ENCODE measurements at regions of chr5 and their contacts with region 1.

Region 1: DNA sequence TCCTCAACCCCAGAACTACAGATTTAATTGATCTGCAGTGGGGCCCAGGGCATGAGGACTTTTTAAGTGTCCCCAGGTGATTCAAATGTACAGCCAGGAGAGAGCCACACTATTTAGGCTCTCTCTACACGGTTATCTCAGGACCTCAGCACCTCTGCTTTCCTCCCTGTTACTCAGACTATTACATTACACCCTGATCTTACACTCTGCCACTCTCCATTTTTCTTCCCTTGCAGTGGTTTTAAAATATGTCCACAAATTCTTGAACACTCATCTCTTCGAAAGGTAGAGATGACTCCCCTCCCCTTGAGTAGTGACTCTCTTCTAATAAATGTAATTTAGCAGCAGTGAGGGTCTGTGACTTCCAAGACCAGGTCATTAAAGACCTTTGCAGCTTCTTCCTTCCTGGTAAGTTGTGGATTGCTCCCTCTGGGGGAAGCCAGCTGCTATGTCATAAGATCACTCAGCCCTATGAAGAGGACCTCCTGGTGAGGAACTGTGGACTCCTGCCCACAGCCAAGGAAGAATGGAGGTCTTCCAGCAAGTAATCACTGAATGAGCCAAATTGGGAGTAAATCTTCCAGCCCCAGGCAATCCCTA is 87.5 kb upstream of the SSBP2 start:
- DNase-seq: peak in 6 of 9 donors; percentile 24 to 50 (median 41)
- ATAC-seq: peak; percentile 87
- H3K4me3 ChIP-seq: no peak overlapping the region
- H3K4me3 Mint-ChIP-seq: no peak overlapping the region
- H3K27ac ChIP-seq: no peak overlapping the region
- H3K27ac Mint-ChIP-seq: peak overlapping the region in 4 of 9 donors; percentile 1 to 51 (median 6)
- H3K4me1 ChIP-seq: peaks cover 0 to 8% of the 10 kb centered on the region in 2 donors
- H3K4me1 Mint-ChIP-seq: peaks cover 4 to 12% (median 8%) of the 10 kb centered on the region in 7 donors
- H3K27me3 ChIP-seq: no peaks in the 10 kb centered on the region
- H3K27me3 Mint-ChIP-seq: peaks cover 0 to 3% (median 0%) of the 10 kb centered on the region in 5 donors

Region 2: DNA sequence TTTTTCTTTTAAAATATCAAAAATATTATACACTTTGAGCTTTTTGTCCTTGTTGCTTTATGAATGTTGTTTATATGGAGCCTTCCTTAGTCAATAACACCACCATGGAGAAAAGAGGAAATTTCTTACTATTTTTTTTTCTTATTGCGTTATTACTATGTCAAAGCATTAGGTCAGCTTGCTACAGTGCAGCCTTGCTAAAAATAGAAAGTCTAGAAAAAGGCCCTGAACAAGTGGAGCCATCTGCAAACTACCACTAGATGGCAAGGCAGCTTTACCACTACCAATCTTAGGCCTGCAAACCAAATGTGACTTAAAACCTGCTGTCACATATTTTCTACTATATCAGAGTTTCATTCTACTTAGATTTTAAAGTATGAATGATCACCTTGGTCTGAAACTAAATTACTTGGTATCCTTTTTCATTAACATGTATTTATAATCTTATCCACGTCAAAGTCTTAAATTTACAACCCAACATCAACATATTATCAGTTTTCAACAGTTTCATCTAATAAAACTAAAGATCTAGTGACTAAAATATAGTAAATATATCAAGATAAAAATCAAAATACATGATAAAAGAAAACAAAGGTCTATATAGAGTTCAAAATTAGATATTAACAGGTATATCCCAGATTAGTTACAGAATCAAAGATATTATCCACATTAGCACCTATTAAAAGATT is 331.4 kb before region 1 on chr5:
- CTCF ChIA-PET with region 1: interaction called, 6 read pairs
- POLR2A ChIA-PET with region 1: no interaction called
- intact Hi-C with region 1: loop called (anchors 1 kb)
- DNase-seq: peak in 7 of 9 donors; percentile 34 to 66 (median 55)
- ATAC-seq: peak; percentile 96
- H3K4me3 ChIP-seq: no peak overlapping the region
- H3K4me3 Mint-ChIP-seq: no peak overlapping the region
- H3K27ac ChIP-seq: no peak overlapping the region
- H3K27ac Mint-ChIP-seq: no peak overlapping the region
- H3K4me1 ChIP-seq: no peaks in the 10 kb centered on the region
- H3K4me1 Mint-ChIP-seq: peaks cover 0 to 27% (median 8%) of the 10 kb centered on the region in 7 donors
- H3K27me3 ChIP-seq: no peaks in the 10 kb centered on the region
- H3K27me3 Mint-ChIP-seq: no peaks in the 10 kb centered on the region

Region 3: GRCh38 chr5:81533629-81534405 is 304.6 kb before region 1 on chr5:
- CTCF ChIA-PET with region 1: no interaction called
- POLR2A ChIA-PET with region 1: no interaction called
- intact Hi-C with region 1: loop called in 1 of 2 experiments (anchors 1 kb)
- DNase-seq: no peak
- ATAC-seq: no peak
- H3K4me3 ChIP-seq: no peak overlapping the region
- H3K4me3 Mint-ChIP-seq: peak overlapping the region in 9 of 10 donors; percentile 8 to 74 (median 50)
- H3K27ac ChIP-seq: peak overlapping the region; percentile 22
- H3K27ac Mint-ChIP-seq: peak overlapping the region in 8 of 9 donors; percentile 77 to 92 (median 85)
- H3K4me1 ChIP-seq: peaks cover 0 to 38% of the 10 kb centered on the region in 2 donors
- H3K4me1 Mint-ChIP-seq: peaks cover 28 to 98% (median 78%) of the 10 kb centered on the region in 7 donors
- H3K27me3 ChIP-seq: no peaks in the 10 kb centered on the region
- H3K27me3 Mint-ChIP-seq: no peaks in the 10 kb centered on the region

Region 4: DNA sequence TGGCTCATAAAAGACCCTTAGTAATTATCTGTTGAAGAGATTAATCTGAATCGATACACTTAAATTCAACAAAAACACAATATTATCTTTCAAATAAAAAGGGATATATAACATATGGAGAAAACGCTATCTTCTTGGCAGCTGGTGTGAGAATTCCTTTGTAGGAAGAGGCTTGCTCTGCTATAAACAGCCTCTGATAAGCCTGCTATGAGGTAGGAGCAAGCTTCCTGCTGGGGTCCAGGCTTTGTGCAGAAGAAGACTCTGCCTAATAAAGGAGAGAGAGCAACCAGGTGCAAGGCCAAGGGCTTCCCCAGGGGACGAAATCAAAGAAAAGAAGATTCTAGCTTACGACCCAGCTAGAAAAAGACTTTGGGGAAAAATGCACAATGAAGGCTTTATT is 44.2 kb before region 1 on chr5:
- CTCF ChIA-PET with region 1: no interaction called
- POLR2A ChIA-PET with region 1: no interaction called
- intact Hi-C with region 1: loop called in 1 of 2 experiments (anchors 5 kb)
- DNase-seq: no peak
- ATAC-seq: no peak
- H3K4me3 ChIP-seq: no peak overlapping the region
- H3K4me3 Mint-ChIP-seq: no peak overlapping the region
- H3K27ac ChIP-seq: no peak overlapping the region
- H3K27ac Mint-ChIP-seq: no peak overlapping the region
- H3K4me1 ChIP-seq: no peaks in the 10 kb centered on the region
- H3K4me1 Mint-ChIP-seq: peaks cover 0 to 15% (median 4%) of the 10 kb centered on the region in 7 donors
- H3K27me3 ChIP-seq: no peaks in the 10 kb centered on the region
- H3K27me3 Mint-ChIP-seq: peaks cover 0 to 3% (median 0%) of the 10 kb centered on the region in 5 donors

Region 5: DNA sequence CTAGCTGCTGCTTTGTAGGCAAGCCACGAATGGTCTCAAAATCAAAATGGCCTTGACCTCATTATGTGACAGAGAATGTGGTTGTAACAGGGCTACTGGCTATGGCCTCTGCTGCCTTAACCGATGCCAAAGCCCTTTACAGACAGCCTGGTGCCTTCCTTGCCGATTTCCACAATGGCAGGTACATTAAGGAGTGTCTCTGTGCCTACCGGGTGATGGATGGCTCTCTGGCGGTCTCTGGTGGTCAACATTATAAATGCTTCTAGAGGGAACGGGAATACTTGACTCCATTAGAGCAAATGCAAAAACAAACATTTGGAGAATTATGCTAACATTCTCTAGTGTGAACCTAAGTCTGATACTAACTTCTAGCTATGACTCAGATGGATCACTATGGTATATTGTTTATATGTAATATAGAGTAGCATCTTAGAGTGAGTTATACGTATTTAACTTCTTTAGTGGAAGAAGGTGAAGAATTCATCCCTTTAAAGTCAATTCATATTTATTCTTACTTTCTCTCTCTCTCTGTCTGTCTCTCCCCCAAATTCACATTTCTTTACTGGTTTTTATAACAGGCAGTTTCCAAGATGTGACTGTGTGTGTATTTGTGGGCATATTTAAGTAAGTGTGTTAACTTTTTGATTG is 387.2 kb after region 1 on chr5:
- CTCF ChIA-PET with region 1: no interaction called
- POLR2A ChIA-PET with region 1: no interaction called
- intact Hi-C with region 1: loop called in 1 of 2 experiments (anchors 2 kb)
- DNase-seq: peak; percentile 30 to 63 (median 57)
- ATAC-seq: peak; percentile 90
- H3K4me3 ChIP-seq: no peak overlapping the region
- H3K4me3 Mint-ChIP-seq: peak overlapping the region in 2 of 10 donors; percentile 23 to 33
- H3K27ac ChIP-seq: no peak overlapping the region
- H3K27ac Mint-ChIP-seq: no peak overlapping the region
- H3K4me1 ChIP-seq: no peaks in the 10 kb centered on the region
- H3K4me1 Mint-ChIP-seq: peaks cover 0 to 11% (median 4%) of the 10 kb centered on the region in 7 donors
- H3K27me3 ChIP-seq: no peaks in the 10 kb centered on the region
- H3K27me3 Mint-ChIP-seq: no peaks in the 10 kb centered on the region